GM12878 (cell line): ENCODE measurements at regions of chr9 and their contacts with region 1.

Region 1: GRCh38 chr9:132260846-132261245 is 93.9 kb downstream of the SETX start:
- DNase-seq: no peak
- ATAC-seq: no peak
- H3K4me3 ChIP-seq: no peak overlapping the region
- H3K27ac ChIP-seq: no peak overlapping the region
- H3K4me1 ChIP-seq: no peaks in the 10 kb centered on the region
- H3K27me3 ChIP-seq: no peaks in the 10 kb centered on the region
- CTCF ChIP-seq: no peak
- EP300 ChIP-seq: no peak
- POLR2A ChIP-seq: no peak
- RAD21 ChIP-seq: no peak

Region 2: GRCh38 chr9:132032238-132032950 is 228.5 kb before region 1 on chr9:
- CTCF ChIA-PET with region 1: no interaction called
- POLR2A ChIA-PET with region 1: no interaction called
- RAD21 ChIA-PET with region 1: no interaction called
- SMC1A ChIA-PET with region 1: no interaction called
- in situ Hi-C with region 1: no loop called
- intact Hi-C with region 1: no loop called
- DNase-seq: peak; percentile 17
- ATAC-seq: peak; percentile 81
- H3K4me3 ChIP-seq: no peak overlapping the region
- H3K27ac ChIP-seq: no peak overlapping the region
- H3K4me1 ChIP-seq: peaks cover 17% of the 10 kb centered on the region
- H3K27me3 ChIP-seq: no peaks in the 10 kb centered on the region
- CTCF ChIP-seq: no peak
- EP300 ChIP-seq: no peak
- POLR2A ChIP-seq: no peak
- RAD21 ChIP-seq: no peak

Region 3: DNA sequence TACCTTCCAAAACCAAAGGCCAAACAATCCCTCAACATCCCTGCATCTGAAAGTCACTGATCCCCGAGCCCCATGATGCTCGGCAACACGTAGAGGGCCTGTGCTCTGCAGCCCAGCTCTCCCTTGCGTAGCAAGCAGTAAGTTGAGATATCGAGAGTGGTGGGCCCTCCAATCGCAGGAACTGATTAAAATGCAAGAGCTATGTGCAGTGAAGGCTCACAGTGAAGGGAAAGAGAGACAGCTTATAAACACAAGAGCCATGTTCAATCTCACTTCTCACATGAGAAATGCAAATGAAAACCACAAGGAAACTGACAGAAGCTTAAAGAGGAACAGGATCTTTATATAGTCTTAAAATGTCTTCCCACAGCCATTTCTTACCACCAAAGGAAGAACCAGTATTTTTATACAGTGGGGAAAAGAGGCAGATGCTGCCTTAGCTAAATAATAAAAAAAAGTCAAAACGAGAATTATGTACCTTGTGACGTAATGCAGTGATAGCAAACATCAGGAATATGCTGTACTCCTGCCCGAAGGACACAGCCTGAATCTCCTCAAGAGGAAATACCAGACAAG is 121.2 kb after region 1 on chr9:
- CTCF ChIA-PET with region 1: interaction called, 13 read pairs
- POLR2A ChIA-PET with region 1: interaction called, 3 read pairs
- RAD21 ChIA-PET with region 1: no interaction called
- SMC1A ChIA-PET with region 1: interaction called, 3 read pairs
- in situ Hi-C with region 1: no loop called
- intact Hi-C with region 1: no loop called
- DNase-seq: peak; percentile 90
- ATAC-seq: peak; percentile 90
- H3K4me3 ChIP-seq: peak overlapping the region; percentile 46; the same call in 1 of the 2 replicates
- H3K27ac ChIP-seq: peak overlapping the region; percentile 94
- H3K4me1 ChIP-seq: peaks cover 41% of the 10 kb centered on the region
- H3K27me3 ChIP-seq: no peaks in the 10 kb centered on the region
- CTCF ChIP-seq: no peak
- EP300 ChIP-seq: peak; percentile 83 to 86
- POLR2A ChIP-seq: peak; percentile 65
- RAD21 ChIP-seq: no peak